ENCODE measurements at regions of chr12 and their contacts with region 1.

Region 1: GRCh38 chr12:79407671-79408622 is 282.8 kb downstream of the PAWR start:
- DNase-seq: peak; percentile 69
- H3K4me3 ChIP-seq: no peak overlapping the region
- H3K27ac ChIP-seq: peak overlapping the region in 1 of 4 donors; percentile 2
- H3K4me1 ChIP-seq: peaks cover 0 to 18% (median 10%) of the 10 kb centered on the region in 4 donors
- H3K27me3 ChIP-seq: no peaks in the 10 kb centered on the region
- CTCF ChIP-seq: peak; percentile 55 to 74 (median 66)
- EP300 ChIP-seq: no peak
- POLR2A ChIP-seq: no peak

Region 2: DNA sequence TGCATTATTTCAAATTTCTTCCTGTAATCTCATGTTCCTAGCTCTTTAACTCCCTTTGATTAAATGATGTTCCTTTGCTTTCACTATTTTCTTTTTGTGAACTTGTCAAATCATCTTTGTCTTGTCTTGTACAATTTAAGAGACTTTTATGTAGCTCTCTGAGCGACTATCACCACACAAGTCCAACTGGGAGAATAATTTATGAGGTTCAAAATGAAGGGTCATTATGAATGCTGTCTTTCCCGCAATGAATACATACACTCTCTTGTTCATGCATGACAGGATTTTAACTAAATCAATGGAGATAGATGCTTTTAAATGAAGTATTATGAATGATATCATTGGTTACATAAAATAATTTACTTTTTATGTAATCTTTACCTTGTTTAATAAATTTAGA is 124.6 kb before region 1 on chr12:
- in situ Hi-C with region 1: no loop called
- intact Hi-C with region 1: no loop called
- DNase-seq: no peak
- H3K4me3 ChIP-seq: no peak overlapping the region
- H3K27ac ChIP-seq: no peak overlapping the region
- H3K4me1 ChIP-seq: no peaks in the 10 kb centered on the region
- H3K27me3 ChIP-seq: no peaks in the 10 kb centered on the region
- CTCF ChIP-seq: no peak
- EP300 ChIP-seq: no peak
- POLR2A ChIP-seq: no peak

Region 3: DNA sequence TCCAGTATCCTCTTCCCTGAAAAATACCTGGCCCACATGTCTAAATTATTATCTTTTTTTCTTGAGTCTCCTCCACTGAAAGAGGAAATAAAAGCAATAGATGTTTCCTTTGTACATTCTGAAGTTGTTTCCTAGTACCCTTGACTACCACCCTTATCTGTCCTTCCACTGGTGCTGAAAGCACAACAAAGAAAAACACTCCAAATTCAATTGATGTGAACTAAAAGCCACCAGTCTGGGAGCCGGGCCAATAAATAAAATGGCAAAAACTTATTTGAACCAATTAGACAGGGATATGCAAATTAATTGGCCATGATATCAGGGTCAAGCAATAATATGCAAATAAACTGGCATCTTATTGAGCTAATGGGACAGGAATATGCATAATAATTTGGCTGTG is 47.7 kb before region 1 on chr12:
- in situ Hi-C with region 1: no loop called
- intact Hi-C with region 1: no loop called
- DNase-seq: no peak
- H3K4me3 ChIP-seq: no peak overlapping the region
- H3K27ac ChIP-seq: no peak overlapping the region
- H3K4me1 ChIP-seq: no peaks in the 10 kb centered on the region
- H3K27me3 ChIP-seq: no peaks in the 10 kb centered on the region
- CTCF ChIP-seq: no peak
- EP300 ChIP-seq: no peak
- POLR2A ChIP-seq: no peak

Region 4: GRCh38 chr12:79381248-79382208 is 26.4 kb before region 1 on chr12:
- in situ Hi-C with region 1: no loop called
- intact Hi-C with region 1: no loop called
- DNase-seq: no peak
- H3K4me3 ChIP-seq: no peak overlapping the region
- H3K27ac ChIP-seq: no peak overlapping the region
- H3K4me1 ChIP-seq: peaks cover 0 to 4% (median 0%) of the 10 kb centered on the region in 4 donors
- H3K27me3 ChIP-seq: no peaks in the 10 kb centered on the region
- CTCF ChIP-seq: no peak
- EP300 ChIP-seq: no peak
- POLR2A ChIP-seq: no peak

Region 5: DNA sequence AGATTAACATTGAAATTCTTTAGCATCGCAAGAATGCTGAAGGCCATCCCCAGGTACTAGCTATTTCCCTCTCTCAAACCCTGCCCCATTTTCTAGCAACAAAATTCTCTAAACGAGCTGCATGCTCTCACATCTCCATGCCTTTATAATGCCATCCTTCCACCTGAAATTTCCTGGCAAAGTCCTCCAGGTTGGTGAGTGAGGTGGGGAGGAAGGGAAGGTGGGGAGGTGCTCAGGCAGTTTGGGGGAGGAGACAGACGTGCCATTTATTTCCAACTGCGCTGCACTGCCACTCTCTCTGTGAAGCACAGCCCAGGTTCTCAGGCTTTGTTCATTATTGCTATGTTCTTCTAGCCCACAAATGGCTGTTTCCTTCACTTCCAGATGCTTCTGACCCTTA is 74.4 kb after region 1 on chr12:
- in situ Hi-C with region 1: no loop called
- intact Hi-C with region 1: no loop called
- DNase-seq: no peak
- H3K4me3 ChIP-seq: no peak overlapping the region
- H3K27ac ChIP-seq: no peak overlapping the region
- H3K4me1 ChIP-seq: no peaks in the 10 kb centered on the region
- H3K27me3 ChIP-seq: no peaks in the 10 kb centered on the region
- CTCF ChIP-seq: no peak
- EP300 ChIP-seq: no peak
- POLR2A ChIP-seq: no peak

Region 6: DNA sequence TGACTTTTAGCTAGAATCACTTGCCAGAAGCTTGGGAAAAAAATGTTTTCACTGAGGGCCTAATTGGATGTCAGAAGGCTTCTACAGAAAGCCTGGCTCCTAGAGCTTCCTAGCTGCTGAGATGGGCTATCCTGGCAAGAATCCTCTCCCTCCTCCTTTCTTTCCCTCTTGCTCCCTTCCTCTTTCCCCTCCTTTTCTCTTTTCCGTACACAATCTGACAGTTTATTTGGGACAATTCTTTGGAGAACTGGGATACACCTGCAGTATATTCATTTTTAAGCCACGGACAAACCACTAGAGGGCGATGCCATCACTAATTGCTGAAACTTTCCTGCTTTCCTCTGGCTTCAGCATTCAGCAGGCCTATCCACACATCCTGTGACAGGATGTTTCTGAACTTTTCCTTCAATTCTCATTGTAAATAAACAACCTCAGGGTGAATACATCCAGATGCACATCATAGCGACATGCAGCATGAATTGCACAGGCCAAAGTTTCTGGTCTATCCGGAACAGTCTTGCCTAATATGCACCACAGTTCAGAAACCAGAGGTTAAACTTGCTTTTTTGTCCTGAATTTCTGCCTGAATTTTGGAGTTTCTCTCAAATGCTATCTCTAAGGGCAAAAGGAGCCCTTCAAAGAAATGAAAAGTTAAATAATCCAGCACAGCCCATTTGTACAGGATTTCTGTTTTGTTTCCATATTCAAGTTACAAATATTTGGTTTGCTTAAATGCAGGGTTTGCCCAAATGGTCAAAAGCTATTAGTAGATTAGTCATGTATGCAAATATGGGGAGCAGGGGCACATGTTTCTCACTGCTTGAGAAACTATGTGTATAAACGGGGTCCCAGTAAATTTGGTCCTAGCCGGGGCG is 140.0 kb after region 1 on chr12:
- in situ Hi-C with region 1: loop called in 3 of 4 experiments (anchors 10 to 25 kb)
- intact Hi-C with region 1: no loop called
- DNase-seq: peak; percentile 43
- H3K4me3 ChIP-seq: no peak overlapping the region
- H3K27ac ChIP-seq: peak overlapping the region in 3 of 4 donors; percentile 11 to 68 (median 24)
- H3K4me1 ChIP-seq: peaks cover 0 to 14% (median 9%) of the 10 kb centered on the region in 4 donors
- H3K27me3 ChIP-seq: no peaks in the 10 kb centered on the region
- CTCF ChIP-seq: peak; percentile 62 to 83 (median 70)
- EP300 ChIP-seq: no peak
- POLR2A ChIP-seq: no peak

Region 7: GRCh38 chr12:79555028-79555930 is 147.3 kb after region 1 on chr12:
- in situ Hi-C with region 1: loop called in 1 of 4 experiments (anchors 25 kb)
- intact Hi-C with region 1: no loop called
- DNase-seq: no peak
- H3K4me3 ChIP-seq: no peak overlapping the region
- H3K27ac ChIP-seq: no peak overlapping the region
- H3K4me1 ChIP-seq: peaks cover 4 to 33% (median 11%) of the 10 kb centered on the region in 4 donors
- H3K27me3 ChIP-seq: no peaks in the 10 kb centered on the region
- CTCF ChIP-seq: peak; percentile 49 to 74 (median 54)
- EP300 ChIP-seq: no peak
- POLR2A ChIP-seq: no peak

Region 8: GRCh38 chr12:79690638-79691493 is 282.9 kb after region 1 on chr12 and contains the start of gene PAWR:
- in situ Hi-C with region 1: loop called in 1 of 4 experiments (anchors 25 kb)
- intact Hi-C with region 1: no loop called
- DNase-seq: peak; percentile 86
- H3K4me3 ChIP-seq: peak within 1 kb of the TSS; percentile 76 to 94 (median 84)
- H3K27ac ChIP-seq: peak within 1 kb of the TSS; percentile 90 to 95 (median 92)
- H3K4me1 ChIP-seq: peaks cover 0 to 44% (median 19%) of the 10 kb centered on the region in 4 donors
- H3K27me3 ChIP-seq: peaks cover 3% of the 10 kb centered on the region
- CTCF ChIP-seq: peak; percentile 19 to 49 (median 23)
- EP300 ChIP-seq: no peak
- POLR2A ChIP-seq: peak; percentile 76
- total RNA-seq, gene PAWR: 82.3 to 188 (median 115) TPM

Region 9: GRCh38 chr12:80269803-80270552 is 862.0 kb after region 1 on chr12:
- in situ Hi-C with region 1: loop called in 2 of 4 experiments (anchors 25 kb)
- intact Hi-C with region 1: no loop called
- DNase-seq: no peak
- H3K4me3 ChIP-seq: no peak overlapping the region
- H3K27ac ChIP-seq: no peak overlapping the region
- H3K4me1 ChIP-seq: no peaks in the 10 kb centered on the region
- H3K27me3 ChIP-seq: no peaks in the 10 kb centered on the region
- CTCF ChIP-seq: peak; percentile 45 to 63 (median 56)
- EP300 ChIP-seq: no peak
- POLR2A ChIP-seq: no peak